ENCODE measurements at regions of chr1 and their contacts with region 1.

Region 1: DNA sequence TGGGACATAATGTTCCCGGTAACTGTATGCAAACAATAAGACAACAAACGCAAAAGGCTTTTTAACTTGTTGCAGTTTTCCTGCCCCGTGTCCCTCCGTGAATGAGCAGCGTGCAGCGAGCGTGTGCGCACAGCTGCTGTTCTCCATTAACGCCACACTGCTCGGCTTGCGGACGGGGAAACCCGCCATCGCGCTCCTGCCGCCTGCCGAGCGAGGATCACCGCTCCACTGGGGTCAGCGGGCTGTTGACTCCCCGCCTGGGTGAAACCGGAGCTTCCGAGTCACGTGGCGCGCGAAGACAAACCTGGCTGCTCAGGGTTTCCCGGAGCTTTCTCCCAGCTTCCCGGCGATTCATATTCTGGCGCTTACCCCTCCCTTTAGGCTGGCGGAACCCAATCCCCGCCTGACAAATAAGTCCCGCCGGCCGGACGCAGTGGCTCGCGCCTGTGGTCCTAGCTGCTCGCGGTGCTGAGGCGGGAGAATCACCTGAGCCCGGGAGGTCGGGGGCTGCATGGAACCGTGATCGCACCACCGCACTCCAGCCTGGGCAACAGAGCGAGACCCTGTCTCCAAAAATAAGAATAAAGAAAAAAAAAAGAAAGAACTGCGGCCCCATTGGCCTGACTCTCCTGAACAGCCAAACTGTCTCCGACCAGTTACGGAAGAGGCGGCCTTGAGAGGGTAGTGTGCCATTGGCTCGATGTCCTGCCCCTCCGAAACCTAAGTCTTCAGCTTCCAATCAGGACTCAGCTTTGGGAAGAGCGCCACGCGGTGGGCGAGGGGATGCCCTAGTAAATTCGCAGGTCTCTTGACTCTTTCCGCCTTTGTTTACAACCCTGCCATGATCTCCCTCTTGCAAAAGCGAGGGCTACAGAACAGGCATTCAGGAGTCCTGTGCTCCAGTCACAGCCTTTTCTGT is at the start of gene CREB3L4:
- DNase-seq: peak; percentile 92 to 96 (median 94)
- ATAC-seq: peak; percentile 85 to 89 (median 88)
- H3K4me3 ChIP-seq: peak within 1 kb of the TSS; percentile 42 to 84 (median 64)
- H3K27ac ChIP-seq: peak within 1 kb of the TSS; percentile 87 to 99 (median 95)
- H3K4me1 ChIP-seq: peaks cover 0 to 59% (median 34%) of the 10 kb centered on the region in 12 donors
- H3K27me3 ChIP-seq: no peaks in the 10 kb centered on the region
- CTCF ChIP-seq: peak; percentile 18 to 65 (median 44)
- POLR2A ChIP-seq: peak in 1 of 2 donors; percentile 86
- total RNA-seq, gene CREB3L4: 2.5 to 7.2 (median 4.5) TPM

Region 2: GRCh38 chr1:153490272-153491051 is 476.9 kb before region 1 on chr1:
- intact Hi-C with region 1: no loop called
- DNase-seq: peak in 4 of 5 donors; percentile 64 to 85 (median 74)
- ATAC-seq: peak; percentile 17 to 76 (median 68)
- H3K4me3 ChIP-seq: peak overlapping the region in 1 of 12 donors; percentile 13
- H3K27ac ChIP-seq: peak overlapping the region in 11 of 12 donors; percentile 20 to 80 (median 70)
- H3K4me1 ChIP-seq: peaks cover 0 to 39% (median 15%) of the 10 kb centered on the region in 12 donors
- H3K27me3 ChIP-seq: no peaks in the 10 kb centered on the region
- CTCF ChIP-seq: no peak
- POLR2A ChIP-seq: no peak

Region 3: GRCh38 chr1:153677718-153678505 is 289.4 kb before region 1 on chr1:
- intact Hi-C with region 1: loop called in 1 of 10 experiments (anchors 5 kb)
- DNase-seq: peak in 4 of 5 donors; percentile 50 to 71 (median 52)
- ATAC-seq: peak; percentile 44 to 78 (median 67)
- H3K4me3 ChIP-seq: peak overlapping the region; percentile 35 to 76 (median 60)
- H3K27ac ChIP-seq: peak overlapping the region in 11 of 12 donors; percentile 3 to 83 (median 68)
- H3K4me1 ChIP-seq: peaks cover 0 to 26% (median 19%) of the 10 kb centered on the region in 12 donors
- H3K27me3 ChIP-seq: peaks cover 0 to 28% (median 7%) of the 10 kb centered on the region in 9 donors
- CTCF ChIP-seq: peak; percentile 82 to 96 (median 93)
- POLR2A ChIP-seq: no peak

Region 4: GRCh38 chr1:153790966-153791647 is 176.2 kb before region 1 on chr1:
- intact Hi-C with region 1: loop called in 1 of 10 experiments (anchors 5 kb)
- DNase-seq: no peak
- ATAC-seq: peak in 3 of 4 donors; percentile 13 to 25 (median 18)
- H3K4me3 ChIP-seq: peak overlapping the region in 10 of 12 donors; percentile 26 to 51 (median 42)
- H3K27ac ChIP-seq: peak overlapping the region; percentile 73 to 96 (median 89)
- H3K4me1 ChIP-seq: peaks cover 0 to 35% (median 18%) of the 10 kb centered on the region in 12 donors
- H3K27me3 ChIP-seq: no peaks in the 10 kb centered on the region
- CTCF ChIP-seq: no peak
- POLR2A ChIP-seq: no peak

Region 5: GRCh38 chr1:153977250-153978240 is 10.2 kb after region 1 on chr1 and contains the start of gene JTB:
- intact Hi-C with region 1: loop called in 1 of 10 experiments (anchors 1 kb)
- DNase-seq: peak; percentile 90 to 94 (median 92)
- ATAC-seq: peak; percentile 90 to 97 (median 96)
- H3K4me3 ChIP-seq: peak within 1 kb of the TSS; percentile 70 to 97 (median 88)
- H3K27ac ChIP-seq: peak within 1 kb of the TSS; percentile 72 to 97 (median 92)
- H3K4me1 ChIP-seq: peaks cover 0 to 40% (median 19%) of the 10 kb centered on the region in 12 donors
- H3K27me3 ChIP-seq: no peaks in the 10 kb centered on the region
- CTCF ChIP-seq: no peak
- POLR2A ChIP-seq: peak; percentile 66 to 91
- total RNA-seq, gene JTB: 55.0 to 175 (median 79.5) TPM

Measured in heart left ventricle (tissue), 16 donors.